Heart left ventricle (tissue), 16 donors: ENCODE measurements at regions of chr2 and their contacts with region 1.

Region 1: GRCh38 chr2:33015421-33016142 is 68.8 kb downstream of the LTBP1 start:
- DNase-seq: peak in 1 of 5 donors; percentile 41
- ATAC-seq: peak; percentile 74 to 92 (median 90)
- H3K4me3 ChIP-seq: no peak overlapping the region
- H3K27ac ChIP-seq: peak overlapping the region in 10 of 12 donors; percentile 48 to 90 (median 71)
- H3K4me1 ChIP-seq: peaks cover 0 to 68% (median 21%) of the 10 kb centered on the region in 12 donors
- H3K27me3 ChIP-seq: no peaks in the 10 kb centered on the region
- CTCF ChIP-seq: no peak
- POLR2A ChIP-seq: no peak

Region 2: DNA sequence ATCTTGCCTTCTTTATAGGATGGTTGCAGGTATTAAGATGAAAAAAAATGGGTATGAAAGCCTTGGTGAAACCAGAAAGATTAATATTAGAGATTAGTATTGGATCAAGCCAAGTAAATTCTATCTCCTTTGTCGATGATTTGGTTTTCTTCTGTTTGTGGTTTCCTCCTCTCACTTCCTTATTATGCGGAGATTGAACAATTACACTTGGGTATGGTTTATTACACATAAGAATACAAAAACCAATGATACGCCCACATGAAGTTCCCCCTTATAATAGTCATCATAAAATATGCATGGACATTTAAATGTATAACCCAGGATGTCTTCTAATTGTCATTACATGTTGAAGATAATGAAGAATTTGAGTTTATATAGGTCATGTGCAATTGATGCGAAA is 63.9 kb before region 1 on chr2:
- intact Hi-C with region 1: loop called in 5 of 10 experiments (anchors 5 to 10 kb)
- DNase-seq: no peak
- ATAC-seq: no peak
- H3K4me3 ChIP-seq: no peak overlapping the region
- H3K27ac ChIP-seq: peak overlapping the region in 1 of 12 donors; percentile 9
- H3K4me1 ChIP-seq: peaks cover 0 to 51% (median 12%) of the 10 kb centered on the region in 12 donors
- H3K27me3 ChIP-seq: peaks cover 0 to 26% (median 0%) of the 10 kb centered on the region in 9 donors
- CTCF ChIP-seq: no peak
- POLR2A ChIP-seq: no peak

Region 3: DNA sequence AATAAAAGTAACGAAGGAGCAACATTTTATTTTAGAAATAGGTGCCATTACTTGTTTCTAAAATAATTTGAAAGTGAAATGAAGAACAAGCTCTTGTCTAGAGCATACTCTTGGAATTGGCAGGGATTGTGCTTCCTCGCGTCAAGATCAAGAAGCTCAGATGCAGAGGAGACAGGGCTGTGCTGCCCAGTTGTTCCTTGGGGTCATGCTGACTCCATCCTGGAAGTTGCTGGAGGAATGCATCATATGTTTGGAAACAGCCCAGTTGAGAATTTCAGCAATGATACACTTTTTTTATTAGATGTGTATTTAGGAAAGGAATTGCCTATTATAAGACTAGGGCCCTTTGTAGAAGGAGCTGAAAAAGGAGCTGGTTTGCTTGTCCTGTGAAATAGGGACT is 51.6 kb before region 1 on chr2:
- intact Hi-C with region 1: loop called in 2 of 10 experiments (anchors 5 to 10 kb)
- DNase-seq: peak in 1 of 5 donors; percentile 32
- ATAC-seq: no peak
- H3K4me3 ChIP-seq: no peak overlapping the region
- H3K27ac ChIP-seq: no peak overlapping the region
- H3K4me1 ChIP-seq: peaks cover 0 to 45% (median 19%) of the 10 kb centered on the region in 12 donors
- H3K27me3 ChIP-seq: no peaks in the 10 kb centered on the region
- CTCF ChIP-seq: no peak
- POLR2A ChIP-seq: no peak

Region 4: DNA sequence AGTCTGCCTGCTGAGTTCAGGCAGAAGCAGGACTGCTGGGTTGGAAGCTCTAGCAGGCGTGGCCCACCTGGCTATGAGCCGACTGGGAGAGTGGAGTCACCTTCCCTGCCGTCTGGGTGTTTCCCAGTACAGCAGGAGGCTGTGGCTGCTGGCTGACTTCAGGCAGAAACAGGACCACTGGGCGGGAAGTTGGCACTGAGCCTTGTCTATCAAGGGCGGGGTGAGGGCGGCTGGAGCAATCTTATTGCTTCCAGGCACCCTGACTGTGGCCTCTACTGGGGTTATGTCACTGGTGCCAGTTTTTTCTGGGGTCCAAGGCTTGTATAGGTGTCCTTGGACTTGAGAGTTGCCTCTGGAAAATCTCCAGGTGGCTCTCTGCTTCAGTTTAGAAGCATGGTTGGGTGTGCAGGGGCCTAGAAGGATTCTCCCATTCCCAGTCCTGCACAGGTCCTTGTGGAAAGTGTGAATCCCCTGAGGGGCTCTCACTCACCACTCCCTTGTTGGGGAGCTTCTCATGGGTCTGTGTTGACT is 38.3 kb before region 1 on chr2:
- intact Hi-C with region 1: loop called in 1 of 10 experiments (anchors 5 kb)
- DNase-seq: peak; percentile 81 to 94 (median 88)
- ATAC-seq: peak; percentile 97 to 99 (median 98)
- H3K4me3 ChIP-seq: no peak overlapping the region
- H3K27ac ChIP-seq: peak overlapping the region in 8 of 12 donors; percentile 4 to 82 (median 51)
- H3K4me1 ChIP-seq: peaks cover 0 to 27% (median 16%) of the 10 kb centered on the region in 12 donors
- H3K27me3 ChIP-seq: no peaks in the 10 kb centered on the region
- CTCF ChIP-seq: no peak
- POLR2A ChIP-seq: no peak